ENCODE measurements at regions of chr12 and their contacts with region 1.

Region 1: DNA sequence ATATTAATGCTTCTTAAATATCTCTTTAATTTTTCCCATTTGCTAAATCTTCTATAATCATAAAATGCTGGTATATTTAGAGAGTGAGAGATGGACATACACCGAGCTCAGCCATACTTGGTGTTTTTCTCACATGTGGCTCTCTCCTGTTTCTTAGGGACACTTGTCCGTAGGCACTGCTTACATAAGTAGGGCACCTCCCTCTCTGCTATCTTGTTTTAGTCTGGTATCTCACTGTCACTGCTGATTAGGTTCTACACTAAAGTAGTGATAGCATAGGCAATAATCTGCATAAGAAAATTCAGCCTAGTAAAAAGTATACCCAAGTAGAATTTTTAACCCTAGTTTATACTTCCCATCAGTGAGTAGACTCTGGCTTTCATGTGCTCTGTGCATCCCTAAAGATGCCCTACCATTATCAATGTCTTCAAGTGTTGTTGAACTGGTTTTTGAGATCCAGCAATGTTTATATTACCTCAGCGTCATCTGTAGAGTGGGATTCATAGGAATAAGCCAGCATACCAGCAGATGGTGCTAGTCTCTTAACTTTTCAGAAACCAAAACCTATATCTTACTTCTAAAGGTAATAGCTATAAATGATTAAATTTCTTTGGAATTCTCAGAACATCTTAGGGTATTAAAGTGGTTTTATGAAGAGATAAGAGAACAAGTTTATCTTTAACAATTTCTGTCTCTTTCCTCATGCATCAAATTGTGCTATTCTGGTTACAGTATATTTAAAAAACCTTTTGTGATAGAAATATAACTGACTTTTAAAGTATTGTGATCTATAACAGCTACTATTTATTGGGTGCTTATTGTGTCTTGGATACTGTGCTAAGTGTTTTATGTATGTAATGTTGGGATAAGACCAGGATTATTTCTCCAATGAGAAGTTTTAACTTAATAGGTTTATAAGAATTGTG is 32.9 kb downstream of the ARID2 start:
- DNase-seq: peak in 4 of 14 experiments; percentile 22 to 49 (median 44)
- ATAC-seq: no peak
- H3K4me3 ChIP-seq: no peak overlapping the region
- H3K4me3 Mint-ChIP-seq: no peak overlapping the region
- H3K27ac ChIP-seq: no peak overlapping the region
- H3K27ac Mint-ChIP-seq: no peak overlapping the region
- H3K4me1 ChIP-seq: no peaks in the 10 kb centered on the region
- H3K4me1 Mint-ChIP-seq: peaks cover 71% of the 10 kb centered on the region
- H3K27me3 ChIP-seq: no peaks in the 10 kb centered on the region
- H3K27me3 Mint-ChIP-seq: no peaks in the 10 kb centered on the region
- CTCF ChIP-seq: peak; percentile 33

Region 2: DNA sequence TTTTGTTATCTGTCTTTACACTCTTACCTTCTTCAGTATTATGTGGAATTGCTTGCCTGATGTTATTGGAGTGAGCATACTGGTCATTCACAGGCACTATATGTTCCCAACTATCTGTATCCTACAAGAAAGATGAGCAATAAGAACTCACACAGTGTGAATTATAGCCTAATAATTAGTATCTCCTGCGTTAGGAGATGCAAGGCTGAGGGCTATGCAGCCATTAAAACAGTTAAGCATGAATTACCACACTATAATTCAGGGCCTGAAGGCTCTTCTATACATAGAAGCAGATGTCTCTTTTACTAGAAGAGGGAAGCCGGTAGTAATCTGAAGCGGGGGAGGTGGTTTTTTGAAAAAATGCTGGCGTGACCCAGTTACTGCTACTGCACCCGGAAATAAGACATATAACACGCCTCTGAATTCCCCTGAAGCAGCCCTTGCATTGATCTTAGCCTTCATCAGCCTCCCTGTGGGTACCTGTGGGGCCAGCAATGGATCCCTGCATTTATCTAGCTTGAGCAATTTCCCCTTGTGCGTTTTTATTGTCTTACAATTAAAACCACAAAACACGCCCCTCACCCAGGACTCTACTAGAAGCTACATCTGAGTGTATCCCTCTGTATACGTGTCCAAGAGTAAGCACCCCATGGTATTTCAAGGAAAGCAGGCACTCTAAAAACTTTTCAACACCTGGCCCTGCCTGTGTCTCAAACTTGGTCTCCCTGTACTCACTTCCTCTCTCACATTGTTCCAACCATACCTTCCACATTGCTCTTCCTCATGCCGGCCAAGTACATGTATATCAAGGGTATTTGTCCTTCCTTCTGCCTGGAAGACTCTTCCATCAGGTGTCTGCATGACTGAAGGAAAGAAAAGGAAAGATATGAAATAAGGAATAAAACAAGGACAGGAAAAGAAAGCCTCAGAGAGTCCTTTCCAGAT is 243.9 kb before region 1 on chr12:
- CTCF ChIA-PET with region 1: no interaction called
- POLR2A ChIA-PET with region 1: no interaction called
- intact Hi-C with region 1: no loop called
- DNase-seq: peak; percentile 7 to 87 (median 30)
- ATAC-seq: peak; percentile 97
- H3K4me3 ChIP-seq: no peak overlapping the region
- H3K4me3 Mint-ChIP-seq: peak overlapping the region; percentile 30
- H3K27ac ChIP-seq: peak overlapping the region; percentile 11 to 42
- H3K27ac Mint-ChIP-seq: peak overlapping the region; percentile 71
- H3K4me1 ChIP-seq: peaks cover 12% of the 10 kb centered on the region
- H3K4me1 Mint-ChIP-seq: peaks cover 24% of the 10 kb centered on the region
- H3K27me3 ChIP-seq: no peaks in the 10 kb centered on the region
- H3K27me3 Mint-ChIP-seq: no peaks in the 10 kb centered on the region
- CTCF ChIP-seq: no peak

Region 3: DNA sequence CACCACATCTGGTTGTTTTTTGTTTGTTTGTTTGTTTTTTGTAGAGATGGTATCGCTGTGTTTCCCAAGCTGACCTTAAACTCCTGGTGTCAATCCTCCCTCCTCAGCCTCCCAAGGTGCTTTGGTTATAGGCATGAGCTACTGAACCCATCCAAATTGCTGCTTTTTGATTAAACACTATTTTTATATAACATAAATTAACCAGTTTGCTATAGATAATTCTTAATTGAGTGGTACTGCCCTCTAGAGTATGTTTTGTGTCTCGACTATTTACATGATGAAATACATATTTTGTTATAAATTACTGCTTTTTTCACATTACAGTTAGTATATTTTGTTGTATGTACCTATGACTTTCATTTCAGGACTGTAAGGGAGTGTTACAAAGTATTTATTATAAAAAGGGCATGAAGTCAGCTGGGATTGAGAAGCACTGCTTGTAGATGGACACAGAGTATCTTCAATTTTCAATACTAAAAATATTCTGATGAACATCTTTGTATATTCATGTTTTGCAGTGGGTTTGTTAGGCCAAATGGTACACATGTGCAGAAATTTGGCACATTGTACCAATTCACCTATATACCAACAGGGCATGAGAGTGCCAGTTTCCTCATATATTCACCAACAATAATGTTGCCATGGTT is 242.8 kb after region 1 on chr12:
- CTCF ChIA-PET with region 1: no interaction called
- POLR2A ChIA-PET with region 1: no interaction called
- intact Hi-C with region 1: loop called in 1 of 2 experiments (anchors 10 kb)
- DNase-seq: peak in 3 of 14 experiments; percentile 36 to 40 (median 38)
- ATAC-seq: no peak
- H3K4me3 ChIP-seq: no peak overlapping the region
- H3K4me3 Mint-ChIP-seq: no peak overlapping the region
- H3K27ac ChIP-seq: no peak overlapping the region
- H3K27ac Mint-ChIP-seq: no peak overlapping the region
- H3K4me1 ChIP-seq: no peaks in the 10 kb centered on the region
- H3K4me1 Mint-ChIP-seq: no peaks in the 10 kb centered on the region
- H3K27me3 ChIP-seq: no peaks in the 10 kb centered on the region
- H3K27me3 Mint-ChIP-seq: no peaks in the 10 kb centered on the region
- CTCF ChIP-seq: peak; percentile 45

Region 4: DNA sequence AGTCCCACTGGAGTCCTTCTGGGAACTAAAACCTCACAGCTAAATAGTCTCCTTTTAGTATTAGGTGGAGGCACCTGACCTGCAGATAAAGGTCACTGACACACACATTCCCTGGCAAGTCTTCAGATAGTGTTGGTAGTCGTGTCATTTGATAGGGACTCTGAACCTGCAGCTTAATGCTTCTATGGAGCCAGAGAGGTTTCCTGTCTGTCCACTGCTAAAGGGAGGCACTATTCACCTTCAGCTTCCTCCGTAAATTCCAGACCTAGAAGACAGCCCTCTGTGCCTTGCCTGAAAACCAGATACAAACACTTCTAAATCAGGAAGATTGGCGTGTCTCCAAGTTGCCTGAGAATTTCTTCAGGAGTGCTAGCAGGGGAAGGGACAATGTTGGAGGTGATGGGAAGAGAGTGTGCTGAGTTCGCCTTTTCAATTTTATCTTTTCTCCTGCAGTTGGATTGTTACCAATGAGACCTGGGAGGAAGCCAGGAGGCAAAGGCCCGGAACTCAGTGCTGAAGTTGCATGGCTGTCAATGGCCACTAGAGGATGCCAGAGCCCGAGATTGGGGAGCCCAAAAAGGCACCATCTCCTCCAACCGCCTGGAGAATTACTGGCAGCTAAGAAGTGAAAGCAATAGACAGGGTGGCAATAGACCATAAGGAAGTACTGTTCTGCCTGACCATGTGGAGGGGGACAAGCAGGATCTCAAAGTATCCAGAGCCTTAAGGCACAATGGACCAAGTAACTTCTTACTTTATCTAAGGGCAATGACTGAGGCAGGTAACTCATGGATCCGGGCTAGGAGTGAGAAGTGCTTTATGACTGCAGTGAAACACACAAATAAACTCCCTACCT is 309.5 kb after region 1 on chr12:
- CTCF ChIA-PET with region 1: no interaction called
- POLR2A ChIA-PET with region 1: no interaction called
- intact Hi-C with region 1: loop called in 1 of 2 experiments (anchors 5 kb)
- DNase-seq: peak; percentile 32 to 77 (median 52)
- ATAC-seq: peak; percentile 96
- H3K4me3 ChIP-seq: no peak overlapping the region
- H3K4me3 Mint-ChIP-seq: no peak overlapping the region
- H3K27ac ChIP-seq: no peak overlapping the region
- H3K27ac Mint-ChIP-seq: no peak overlapping the region
- H3K4me1 ChIP-seq: no peaks in the 10 kb centered on the region
- H3K4me1 Mint-ChIP-seq: peaks cover 4% of the 10 kb centered on the region
- H3K27me3 ChIP-seq: no peaks in the 10 kb centered on the region
- H3K27me3 Mint-ChIP-seq: peaks cover 4% of the 10 kb centered on the region
- CTCF ChIP-seq: peak; percentile 88